AG04449 (cell line): ENCODE measurements at regions of chr10 and their contacts with region 1.

Region 1: DNA sequence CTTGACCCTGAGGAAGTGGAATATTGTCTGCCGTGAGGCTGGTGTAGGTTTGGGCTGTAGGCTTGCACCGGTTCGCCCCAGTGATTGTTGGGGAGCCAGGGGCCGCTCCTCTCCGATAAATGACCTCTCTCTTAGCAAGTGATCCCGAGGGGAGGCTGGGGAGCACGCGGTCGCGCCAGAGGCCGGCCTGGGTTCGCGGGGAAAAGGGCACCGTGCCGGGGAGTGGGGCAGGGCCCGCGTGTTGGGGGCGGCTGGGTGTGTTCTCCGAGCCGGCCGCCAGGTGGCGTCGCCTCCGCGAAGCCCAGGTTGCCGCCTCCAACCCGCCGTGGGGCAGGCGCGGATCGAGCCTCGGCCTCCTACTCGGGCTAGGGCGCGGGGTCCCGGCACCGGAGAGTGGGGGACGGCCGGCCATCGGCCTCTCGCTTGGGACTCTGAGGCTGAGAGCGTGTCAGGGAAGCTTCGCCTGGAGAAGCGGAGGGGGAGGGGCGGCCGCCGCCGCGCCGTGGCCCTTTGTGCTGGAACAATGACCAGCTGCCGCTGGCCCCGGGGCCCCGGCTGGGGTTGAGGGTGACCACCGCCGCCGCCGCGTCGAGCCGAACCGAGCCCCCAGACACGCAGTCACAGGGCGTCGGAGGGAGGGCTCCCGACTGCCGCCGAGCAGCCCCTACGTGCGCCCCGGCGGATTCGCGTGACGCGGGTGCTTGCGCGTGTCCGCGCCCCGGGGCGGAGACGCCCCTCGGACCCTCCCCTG is 442 bp upstream of the LZTS2 start:
- DNase-seq: no peak
- H3K4me3 ChIP-seq: peak overlapping the region; percentile 85
- CTCF ChIP-seq: peak; percentile 96

Region 2: GRCh38 chr10:100872034-100872791 is 127.0 kb before region 1 on chr10:
- CTCF ChIA-PET with region 1: no interaction called
- POLR2A ChIA-PET with region 1: no interaction called
- DNase-seq: no peak
- H3K4me3 ChIP-seq: no peak overlapping the region
- CTCF ChIP-seq: peak; percentile 57

Region 3: GRCh38 chr10:100923580-100923979 is 75.6 kb before region 1 on chr10:
- CTCF ChIA-PET with region 1: no interaction called
- POLR2A ChIA-PET with region 1: no interaction called
- DNase-seq: no peak
- H3K4me3 ChIP-seq: no peak overlapping the region
- CTCF ChIP-seq: no peak

Region 4: GRCh38 chr10:100986952-100987750 is 12.0 kb before region 1 on chr10 and contains the starts of genes MRPL43 and TWNK:
- CTCF ChIA-PET with region 1: interaction called, 119 read pairs
- POLR2A ChIA-PET with region 1: interaction called, 4 read pairs
- DNase-seq: no peak
- H3K4me3 ChIP-seq: peak within 1 kb of the TSS; percentile 100
- CTCF ChIP-seq: no peak

Region 5: GRCh38 chr10:101012525-101013364 is 13.6 kb after region 1 on chr10:
- CTCF ChIA-PET with region 1: interaction called, 803 read pairs
- POLR2A ChIA-PET with region 1: interaction called, 16 read pairs
- DNase-seq: no peak
- H3K4me3 ChIP-seq: no peak overlapping the region
- CTCF ChIP-seq: peak; percentile 94

Region 6: DNA sequence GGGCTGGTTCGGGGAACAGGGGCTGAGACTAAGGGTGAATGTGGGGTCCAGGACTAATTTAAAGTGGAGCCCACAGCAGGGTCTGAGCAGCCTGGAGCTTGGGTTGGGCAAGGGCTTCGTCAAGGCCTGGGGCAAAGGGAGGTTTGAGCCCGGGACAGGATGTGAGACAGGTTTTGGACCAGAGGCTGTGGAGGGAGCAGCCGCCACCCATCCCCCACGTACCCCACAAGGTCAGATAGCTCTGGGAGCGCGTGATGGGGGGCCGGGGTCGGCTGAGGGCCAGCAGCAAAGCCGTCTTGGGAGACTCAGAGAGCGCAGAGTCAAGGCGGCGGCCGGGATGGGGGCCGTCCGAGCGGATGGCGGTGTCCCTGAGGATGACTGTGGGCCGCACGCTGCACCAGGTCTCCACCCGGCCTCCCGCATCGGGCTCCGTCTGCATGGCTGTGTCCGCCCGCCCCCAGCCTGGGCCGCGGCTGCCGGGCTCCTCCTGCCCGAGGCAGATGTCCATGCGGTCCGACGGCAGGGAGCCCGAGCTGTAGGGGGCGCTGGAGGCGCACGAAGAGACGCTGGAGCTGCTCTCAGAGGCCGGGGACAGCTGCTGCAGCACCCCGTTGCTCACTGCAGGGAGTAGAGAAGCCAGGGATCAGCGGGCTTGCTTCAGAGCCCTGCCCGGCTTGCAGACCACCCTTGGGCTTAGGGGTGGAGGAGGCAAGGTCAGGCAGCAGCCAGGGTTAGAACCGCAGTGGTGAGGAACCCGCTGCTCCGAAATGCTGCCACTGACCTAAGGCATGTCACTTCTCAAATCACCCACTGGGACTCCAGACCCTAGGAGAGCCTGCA is 19.7 kb after region 1 on chr10:
- CTCF ChIA-PET with region 1: interaction called, 803 read pairs
- POLR2A ChIA-PET with region 1: interaction called, 16 read pairs
- DNase-seq: no peak
- H3K4me3 ChIP-seq: no peak overlapping the region
- CTCF ChIP-seq: peak; percentile 98

Region 7: DNA sequence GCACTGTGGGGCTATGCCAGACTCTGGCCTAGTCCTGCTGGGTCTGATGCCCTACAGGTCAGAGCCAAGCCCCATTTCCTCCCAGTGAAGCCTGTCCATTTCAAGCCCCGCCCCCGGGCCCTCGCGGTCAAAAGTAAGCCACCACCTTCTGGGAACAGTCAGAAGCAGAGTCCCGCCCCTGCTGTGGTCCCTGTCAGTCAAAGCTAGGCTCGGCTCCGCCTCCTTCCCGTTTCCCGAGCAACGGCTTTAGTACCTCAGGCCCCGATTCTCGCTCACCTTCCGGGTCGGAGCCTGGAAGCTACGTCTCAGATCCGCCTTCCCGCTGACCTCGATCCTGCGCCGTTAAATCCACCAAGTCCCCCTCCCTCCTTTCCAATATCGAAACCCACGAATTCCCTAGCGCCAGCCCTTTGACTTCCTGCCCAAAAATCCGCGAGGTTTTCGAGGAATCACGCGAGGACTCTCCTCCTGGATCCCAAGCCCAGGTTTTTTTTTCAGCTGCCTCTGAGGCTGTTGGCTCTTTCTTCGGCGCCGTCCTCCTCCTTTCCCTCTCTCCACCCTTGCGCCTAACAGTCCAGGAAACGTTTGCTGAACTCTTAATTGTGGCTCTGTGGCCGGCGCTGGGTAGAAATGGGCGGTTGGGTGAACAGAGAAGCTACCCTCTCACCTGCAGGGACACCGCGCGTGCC is 43.6 kb after region 1 on chr10:
- CTCF ChIA-PET with region 1: interaction called, 242 read pairs
- POLR2A ChIA-PET with region 1: no interaction called
- DNase-seq: no peak
- H3K4me3 ChIP-seq: peak overlapping the region; percentile 61
- CTCF ChIP-seq: no peak

Region 8: DNA sequence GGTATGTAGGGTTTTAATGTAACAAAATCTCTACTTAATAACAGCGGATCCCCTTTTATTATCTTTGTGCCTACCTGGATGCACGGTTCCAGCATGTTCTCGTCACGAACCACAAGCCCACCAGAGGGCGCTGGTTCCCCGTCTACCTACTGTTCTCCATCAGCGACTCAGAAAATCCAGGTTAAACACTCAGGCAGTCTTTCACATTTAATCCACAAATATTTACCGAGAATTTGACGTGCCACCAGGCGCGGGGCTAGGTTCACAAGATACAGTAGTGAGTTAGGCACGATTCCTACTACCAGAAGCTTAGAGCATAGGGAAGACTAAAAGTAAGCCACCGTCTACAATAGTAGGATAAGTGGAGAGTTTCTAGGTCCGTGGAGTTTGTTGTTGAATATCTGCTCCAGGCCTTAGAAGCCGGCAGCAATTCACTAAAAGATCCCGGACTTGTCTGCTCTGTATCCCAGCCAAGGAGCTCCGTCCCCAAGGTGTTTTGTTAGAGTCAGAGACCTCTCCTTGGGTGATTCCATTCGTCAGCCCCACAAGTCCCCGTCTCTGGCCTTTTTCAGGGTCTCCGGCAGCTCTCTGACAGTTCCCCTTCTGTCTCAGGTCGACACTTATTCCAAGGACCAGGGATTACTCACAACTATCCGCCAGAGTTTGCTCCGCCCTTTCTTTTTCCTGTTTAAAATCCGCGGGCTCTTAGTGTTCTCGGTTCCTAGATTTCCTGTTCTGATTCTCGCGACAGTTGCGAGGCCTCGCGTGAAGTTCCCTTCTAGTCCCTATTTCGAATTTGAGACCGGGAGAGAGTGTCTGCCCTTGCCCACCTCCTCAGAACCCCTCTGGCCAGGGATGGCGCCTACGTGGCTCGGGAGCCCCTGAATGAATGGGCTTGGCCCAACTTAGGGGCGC is 61.1 kb after region 1 on chr10:
- CTCF ChIA-PET with region 1: interaction called, 13 read pairs
- POLR2A ChIA-PET with region 1: no interaction called
- DNase-seq: peak; percentile 50
- H3K4me3 ChIP-seq: peak overlapping the region; percentile 96
- CTCF ChIP-seq: peak; percentile 88

Region 9: GRCh38 chr10:101067356-101068083 is 68.4 kb after region 1 on chr10:
- CTCF ChIA-PET with region 1: interaction called, 12 read pairs
- POLR2A ChIA-PET with region 1: no interaction called
- DNase-seq: no peak
- H3K4me3 ChIP-seq: peak overlapping the region; percentile 56
- CTCF ChIP-seq: peak; percentile 79

Region 10: GRCh38 chr10:101103430-101103829 is 104.3 kb after region 1 on chr10:
- CTCF ChIA-PET with region 1: no interaction called
- POLR2A ChIA-PET with region 1: no interaction called
- DNase-seq: no peak
- H3K4me3 ChIP-seq: no peak overlapping the region
- CTCF ChIP-seq: no peak